A673 (cell line): ENCODE measurements at regions of chr5 and their contacts with region 1.

Region 1: GRCh38 chr5:96752341-96753016 is 55.3 kb downstream of the ERAP1 start:
- DNase-seq: peak; percentile 76
- H3K4me3 ChIP-seq: no peak overlapping the region
- H3K27ac ChIP-seq: no peak overlapping the region
- H3K4me1 ChIP-seq: no peaks in the 10 kb centered on the region
- H3K27me3 ChIP-seq: no peaks in the 10 kb centered on the region
- CTCF ChIP-seq: peak; percentile 82

Region 2: DNA sequence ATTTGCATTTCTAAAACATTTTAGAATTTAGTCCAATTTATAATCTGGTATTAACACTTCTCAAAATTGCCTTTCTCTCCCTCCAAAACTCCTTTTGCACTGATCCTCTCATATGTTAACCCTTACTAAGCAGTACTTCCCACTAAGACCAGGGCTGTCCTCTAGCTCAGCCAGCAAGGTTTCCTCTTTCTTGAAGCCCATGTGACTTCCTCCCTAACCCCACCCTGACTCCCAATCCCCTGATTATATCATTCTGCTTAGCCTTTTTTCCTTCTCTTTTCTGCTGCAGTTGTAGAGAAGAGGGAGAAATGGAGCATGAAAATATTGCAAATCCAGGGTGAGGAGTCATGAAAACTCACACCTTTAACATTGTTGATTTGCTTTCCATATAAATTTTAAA is 1709.2 kb before region 1 on chr5:
- CTCF ChIA-PET with region 1: interaction called, 11 read pairs
- POLR2A ChIA-PET with region 1: no interaction called
- intact Hi-C with region 1: no loop called
- DNase-seq: peak; percentile 73
- H3K4me3 ChIP-seq: no peak overlapping the region
- H3K27ac ChIP-seq: peak overlapping the region; percentile 26
- H3K4me1 ChIP-seq: peaks cover 34% of the 10 kb centered on the region
- H3K27me3 ChIP-seq: no peaks in the 10 kb centered on the region
- CTCF ChIP-seq: no peak

Region 3: GRCh38 chr5:96702503-96703383 is 49.7 kb before region 1 on chr5:
- CTCF ChIA-PET with region 1: interaction called, 13 read pairs
- POLR2A ChIA-PET with region 1: no interaction called
- intact Hi-C with region 1: no loop called
- DNase-seq: peak; percentile 95
- H3K4me3 ChIP-seq: peak overlapping the region; percentile 74
- H3K27ac ChIP-seq: peak overlapping the region; percentile 84
- H3K4me1 ChIP-seq: peaks cover 17% of the 10 kb centered on the region
- H3K27me3 ChIP-seq: no peaks in the 10 kb centered on the region
- CTCF ChIP-seq: no peak

Region 4: DNA sequence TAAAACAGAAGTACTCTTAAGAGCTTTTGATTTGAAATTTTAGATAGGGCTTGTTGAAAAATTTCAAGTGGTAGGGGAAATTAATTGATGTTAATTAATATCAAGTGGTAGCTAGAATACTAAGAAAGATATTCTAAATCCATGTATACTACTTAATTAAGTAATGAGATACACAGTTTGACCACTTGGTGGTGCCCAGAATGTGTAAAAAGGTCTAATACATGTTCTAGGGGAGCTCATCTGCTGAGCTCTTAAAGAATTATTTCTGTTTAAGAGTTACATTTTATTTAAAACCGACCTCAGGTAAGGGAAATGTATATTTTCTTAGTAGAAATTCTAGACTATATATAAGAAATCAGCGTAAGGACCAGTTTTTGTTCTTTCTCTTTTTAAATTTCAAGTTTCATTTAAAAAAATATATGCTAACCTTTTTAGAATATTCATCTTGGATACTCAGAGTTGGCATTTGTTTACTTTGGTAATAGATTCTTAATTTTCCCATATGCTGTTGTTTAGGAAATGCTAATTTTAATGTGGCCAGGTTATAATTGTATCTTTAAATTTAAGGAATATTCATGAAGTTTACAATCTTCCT is 244.9 kb after region 1 on chr5:
- CTCF ChIA-PET with region 1: interaction called, 6 read pairs
- POLR2A ChIA-PET with region 1: no interaction called
- intact Hi-C with region 1: loop called (anchors 5 kb)
- DNase-seq: peak; percentile 67
- H3K4me3 ChIP-seq: no peak overlapping the region
- H3K27ac ChIP-seq: no peak overlapping the region
- H3K4me1 ChIP-seq: no peaks in the 10 kb centered on the region
- H3K27me3 ChIP-seq: no peaks in the 10 kb centered on the region
- CTCF ChIP-seq: peak; percentile 68

Region 5: GRCh38 chr5:97162045-97162444 is 409.6 kb after region 1 on chr5:
- CTCF ChIA-PET with region 1: interaction called, 5 read pairs
- POLR2A ChIA-PET with region 1: no interaction called
- intact Hi-C with region 1: loop called (anchors 1 kb)
- DNase-seq: peak; percentile 82
- H3K4me3 ChIP-seq: no peak overlapping the region
- H3K27ac ChIP-seq: no peak overlapping the region
- H3K4me1 ChIP-seq: no peaks in the 10 kb centered on the region
- H3K27me3 ChIP-seq: no peaks in the 10 kb centered on the region
- CTCF ChIP-seq: peak; percentile 86